ENCODE measurements at regions of chr6 and their contacts with region 1.

Region 1: DNA sequence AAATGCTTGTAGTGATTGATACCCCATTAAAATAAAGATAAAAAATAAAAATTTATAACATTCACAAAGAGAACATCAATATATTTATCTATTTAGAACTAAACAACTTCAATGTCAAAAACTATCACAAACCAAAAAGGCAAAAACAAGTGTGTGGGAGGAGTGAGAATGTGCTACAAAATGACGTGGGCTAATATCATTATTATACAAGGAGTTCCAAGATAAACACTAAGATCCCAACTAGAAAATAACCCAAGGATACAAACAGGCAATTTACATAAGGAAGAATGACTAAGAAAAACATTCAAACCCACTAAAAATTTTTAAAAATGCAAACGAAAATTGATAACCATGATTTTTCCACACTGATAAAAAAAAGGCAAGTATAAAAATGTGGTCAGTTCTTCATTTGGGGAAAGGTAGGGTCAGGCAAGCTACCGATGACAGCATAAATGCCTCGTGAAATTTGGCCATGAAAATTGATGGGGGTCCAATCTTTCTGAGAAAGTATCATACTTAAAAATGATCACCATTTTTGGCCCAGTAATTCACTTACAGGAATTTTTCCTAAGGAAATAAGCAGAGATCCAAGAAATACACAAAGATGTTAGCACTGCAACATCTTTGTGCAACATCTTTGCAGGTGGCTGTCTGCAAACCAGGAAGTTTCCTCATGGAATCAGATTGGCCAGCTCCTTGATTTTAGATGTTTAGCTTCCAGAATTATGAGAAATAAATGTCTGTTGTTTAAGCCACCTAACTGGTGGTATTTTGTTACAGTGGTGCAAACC is 140.2 kb downstream of the TMEM200A start:
- DNase-seq: no peak
- ATAC-seq: no peak
- H3K4me3 ChIP-seq: no peak overlapping the region
- H3K4me3 Mint-ChIP-seq: no peak overlapping the region
- H3K27ac ChIP-seq: no peak overlapping the region
- H3K27ac Mint-ChIP-seq: peak overlapping the region in 1 of 9 donors; percentile 50
- H3K4me1 ChIP-seq: peaks cover 13 to 30% of the 10 kb centered on the region in 2 donors
- H3K4me1 Mint-ChIP-seq: peaks cover 16 to 62% (median 52%) of the 10 kb centered on the region in 7 donors
- H3K27me3 ChIP-seq: no peaks in the 10 kb centered on the region
- H3K27me3 Mint-ChIP-seq: no peaks in the 10 kb centered on the region

Region 2: GRCh38 chr6:130525408-130525807 is 19.4 kb after region 1 on chr6:
- CTCF ChIA-PET with region 1: no interaction called
- POLR2A ChIA-PET with region 1: no interaction called
- intact Hi-C with region 1: loop called in 1 of 2 experiments (anchors 2 kb)
- DNase-seq: peak in 6 of 9 donors; percentile 19 to 40 (median 40)
- ATAC-seq: peak; percentile 58
- H3K4me3 ChIP-seq: no peak overlapping the region
- H3K4me3 Mint-ChIP-seq: peak overlapping the region in 9 of 10 donors; percentile 2 to 73 (median 44)
- H3K27ac ChIP-seq: peak overlapping the region; percentile 14
- H3K27ac Mint-ChIP-seq: peak overlapping the region; percentile 66 to 87 (median 86)
- H3K4me1 ChIP-seq: peaks cover 17 to 33% of the 10 kb centered on the region in 2 donors
- H3K4me1 Mint-ChIP-seq: peaks cover 13 to 55% (median 47%) of the 10 kb centered on the region in 7 donors
- H3K27me3 ChIP-seq: no peaks in the 10 kb centered on the region
- H3K27me3 Mint-ChIP-seq: no peaks in the 10 kb centered on the region

Region 3: DNA sequence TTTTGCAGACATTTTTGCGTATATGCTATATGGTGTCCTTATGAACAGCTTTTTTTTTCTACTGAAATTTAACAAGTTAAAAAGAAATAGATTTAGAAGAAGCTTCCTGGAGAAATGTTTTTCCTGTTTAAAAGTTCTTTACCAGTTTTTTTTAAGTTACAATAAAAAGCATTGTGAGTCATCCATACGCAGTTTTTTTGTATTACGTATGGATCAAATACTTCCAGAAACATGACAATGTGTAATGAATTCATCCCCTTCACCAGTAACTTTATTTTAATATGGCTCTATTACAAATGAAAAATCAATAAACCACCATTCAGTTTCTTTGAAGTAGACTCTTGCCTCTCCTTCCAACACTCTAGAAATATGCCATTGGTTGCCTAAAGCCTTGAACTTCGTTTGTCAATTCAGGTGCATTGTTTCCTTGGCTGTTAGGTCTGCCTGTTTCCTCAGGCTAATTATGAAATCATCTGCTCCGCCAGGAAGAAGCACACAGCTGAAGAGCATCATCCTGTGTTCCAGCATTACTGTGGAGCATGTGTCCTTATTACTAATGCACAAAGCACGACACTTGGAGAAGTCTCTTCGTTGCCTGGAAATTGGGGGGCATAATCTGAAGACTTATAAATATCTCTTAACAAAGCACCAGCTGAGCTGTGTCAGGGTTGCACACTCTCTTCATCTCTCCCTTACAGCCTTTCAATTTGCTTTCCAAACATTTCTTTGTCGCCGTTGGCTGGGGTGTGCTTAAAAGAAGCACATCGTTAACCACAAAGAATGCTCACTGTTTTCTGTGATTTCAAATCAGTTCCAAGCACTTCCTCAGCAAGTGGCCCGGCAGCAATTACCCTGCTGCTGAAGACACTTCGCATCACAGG is 1885.6 kb after region 1 on chr6:
- CTCF ChIA-PET with region 1: no interaction called
- POLR2A ChIA-PET with region 1: no interaction called
- intact Hi-C with region 1: no loop called
- DNase-seq: no peak
- ATAC-seq: no peak
- H3K4me3 ChIP-seq: no peak overlapping the region
- H3K4me3 Mint-ChIP-seq: no peak overlapping the region
- H3K27ac ChIP-seq: no peak overlapping the region
- H3K27ac Mint-ChIP-seq: no peak overlapping the region
- H3K4me1 ChIP-seq: no peaks in the 10 kb centered on the region
- H3K4me1 Mint-ChIP-seq: no peaks in the 10 kb centered on the region
- H3K27me3 ChIP-seq: no peaks in the 10 kb centered on the region
- H3K27me3 Mint-ChIP-seq: peaks cover 10 to 47% (median 28%) of the 10 kb centered on the region in 5 donors